SK-N-SH (cell line): ENCODE measurements at regions of chr9 and their contacts with region 1.

Region 1: DNA sequence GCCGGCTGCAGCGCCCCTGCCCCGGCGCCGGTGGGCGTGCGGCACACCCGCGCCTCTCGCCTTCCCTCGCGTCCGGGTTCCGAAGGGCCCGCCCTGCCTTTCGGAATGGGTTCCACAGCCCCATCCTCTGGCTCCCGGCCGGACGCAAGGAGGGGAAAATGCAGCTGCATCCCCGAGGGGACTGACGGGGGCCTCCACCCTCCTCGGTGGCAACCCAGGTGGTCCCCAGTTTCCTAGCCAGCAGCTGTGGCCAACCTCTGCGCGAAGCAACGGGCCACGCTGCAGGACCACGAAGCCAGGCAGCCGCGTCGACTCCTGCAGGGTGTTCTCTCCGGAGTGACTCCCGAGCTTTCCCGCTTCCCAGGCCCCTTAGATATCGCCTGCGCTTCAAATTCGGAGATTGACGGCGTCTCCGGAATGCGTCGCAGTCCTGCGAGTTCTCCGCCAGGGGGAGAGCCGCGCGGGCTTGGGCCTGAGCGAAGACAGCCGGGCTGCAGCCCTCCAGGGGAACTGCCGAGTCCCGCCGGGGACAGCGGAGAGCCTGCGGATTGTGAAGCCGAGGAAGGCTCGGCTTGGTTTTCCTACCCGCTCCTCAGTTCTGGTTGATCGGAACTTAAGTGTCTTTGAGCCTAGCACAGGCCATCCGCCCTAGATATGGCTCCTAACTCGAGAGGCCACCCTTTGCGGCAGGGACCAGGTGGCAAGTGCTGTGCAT is 582 bp upstream of the APBA1 start:
- DNase-seq: peak; percentile 86
- H3K4me3 ChIP-seq: peak overlapping the region; percentile 70 to 80
- H3K27ac ChIP-seq: peak overlapping the region; percentile 50 to 92
- H3K4me1 ChIP-seq: peaks cover 8 to 23% of the 10 kb centered on the region in 2 experiments; a peak in 3 of 4 replicates
- H3K27me3 ChIP-seq: no peaks in the 10 kb centered on the region
- CTCF ChIP-seq: peak; percentile 86
- EP300 ChIP-seq: no peak; a peak in 1 of 4 replicates
- RAD21 ChIP-seq: peak; percentile 71

Region 2: DNA sequence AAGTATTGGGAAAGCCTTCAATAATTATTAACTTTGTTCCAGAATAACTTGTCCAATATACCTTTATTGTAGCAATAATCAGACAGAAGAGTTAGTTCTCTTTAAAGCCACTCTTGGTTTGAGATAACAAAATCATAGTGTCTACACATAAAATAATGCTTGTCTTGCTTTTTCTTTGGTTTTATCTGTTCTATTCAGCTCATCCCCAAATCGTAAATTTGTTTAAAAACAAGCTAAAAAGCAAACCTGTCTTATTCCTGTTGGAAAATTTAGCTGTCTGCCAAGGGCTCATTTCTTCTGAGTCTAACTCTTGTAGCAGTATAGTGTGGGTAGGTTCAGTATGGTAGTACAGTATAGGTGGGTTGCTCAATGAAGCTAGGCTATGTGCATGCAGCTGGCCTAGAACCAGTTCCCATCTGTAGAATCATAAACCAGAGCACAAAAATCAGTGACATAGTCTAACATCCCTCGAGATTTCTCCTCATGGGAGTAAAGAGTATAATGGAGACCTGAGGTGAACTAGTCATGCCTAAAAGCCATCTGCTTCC is 17.3 kb after region 1 on chr9:
- CTCF ChIA-PET with region 1: interaction called, 10 read pairs
- POLR2A ChIA-PET with region 1: no interaction called
- DNase-seq: no peak
- H3K4me3 ChIP-seq: no peak overlapping the region
- H3K27ac ChIP-seq: no peak overlapping the region
- H3K4me1 ChIP-seq: no peaks in the 10 kb centered on the region
- H3K27me3 ChIP-seq: no peaks in the 10 kb centered on the region
- CTCF ChIP-seq: no peak
- EP300 ChIP-seq: no peak
- RAD21 ChIP-seq: no peak

Region 3: DNA sequence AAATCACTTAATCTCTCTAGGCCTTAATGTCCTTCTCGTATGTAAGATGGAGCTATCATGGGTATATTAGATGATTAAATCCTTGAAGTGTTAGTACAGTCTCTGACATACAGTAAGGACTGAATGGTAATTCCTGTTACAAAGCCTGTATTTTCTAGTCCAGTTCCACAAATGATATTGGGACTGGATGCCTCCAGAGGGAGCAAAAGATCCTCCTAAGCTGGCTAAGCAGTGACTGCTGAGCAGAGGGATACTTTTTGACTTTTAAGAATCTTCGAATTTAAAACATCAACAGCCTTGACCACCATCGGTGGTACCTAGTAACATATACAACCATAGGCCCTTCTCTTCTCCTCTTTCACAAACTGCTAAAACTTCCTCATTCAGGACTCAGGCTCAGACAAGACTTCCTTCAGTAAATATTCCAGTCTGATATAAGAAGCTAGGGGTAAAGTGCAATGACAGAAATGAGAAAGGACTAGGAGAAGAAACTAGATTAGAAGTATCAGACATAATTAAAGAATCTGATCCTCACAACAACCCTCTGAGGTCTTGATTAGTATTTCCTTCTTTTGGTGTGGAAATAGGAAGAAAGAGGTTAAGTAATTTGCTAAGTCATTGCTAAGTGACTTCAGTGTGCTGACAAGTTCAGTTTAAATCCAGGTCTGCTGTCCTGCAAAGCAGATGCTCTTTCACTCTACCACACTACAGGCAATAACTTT is 73.1 kb after region 1 on chr9:
- CTCF ChIA-PET with region 1: interaction called, 20 read pairs
- POLR2A ChIA-PET with region 1: no interaction called
- DNase-seq: no peak
- H3K4me3 ChIP-seq: no peak overlapping the region
- H3K27ac ChIP-seq: no peak overlapping the region
- H3K4me1 ChIP-seq: peaks cover 2 to 6% of the 10 kb centered on the region in 2 experiments; a peak in 3 of 4 replicates
- H3K27me3 ChIP-seq: no peaks in the 10 kb centered on the region
- CTCF ChIP-seq: peak; percentile 43
- EP300 ChIP-seq: no peak
- RAD21 ChIP-seq: peak; percentile 47

Region 4: DNA sequence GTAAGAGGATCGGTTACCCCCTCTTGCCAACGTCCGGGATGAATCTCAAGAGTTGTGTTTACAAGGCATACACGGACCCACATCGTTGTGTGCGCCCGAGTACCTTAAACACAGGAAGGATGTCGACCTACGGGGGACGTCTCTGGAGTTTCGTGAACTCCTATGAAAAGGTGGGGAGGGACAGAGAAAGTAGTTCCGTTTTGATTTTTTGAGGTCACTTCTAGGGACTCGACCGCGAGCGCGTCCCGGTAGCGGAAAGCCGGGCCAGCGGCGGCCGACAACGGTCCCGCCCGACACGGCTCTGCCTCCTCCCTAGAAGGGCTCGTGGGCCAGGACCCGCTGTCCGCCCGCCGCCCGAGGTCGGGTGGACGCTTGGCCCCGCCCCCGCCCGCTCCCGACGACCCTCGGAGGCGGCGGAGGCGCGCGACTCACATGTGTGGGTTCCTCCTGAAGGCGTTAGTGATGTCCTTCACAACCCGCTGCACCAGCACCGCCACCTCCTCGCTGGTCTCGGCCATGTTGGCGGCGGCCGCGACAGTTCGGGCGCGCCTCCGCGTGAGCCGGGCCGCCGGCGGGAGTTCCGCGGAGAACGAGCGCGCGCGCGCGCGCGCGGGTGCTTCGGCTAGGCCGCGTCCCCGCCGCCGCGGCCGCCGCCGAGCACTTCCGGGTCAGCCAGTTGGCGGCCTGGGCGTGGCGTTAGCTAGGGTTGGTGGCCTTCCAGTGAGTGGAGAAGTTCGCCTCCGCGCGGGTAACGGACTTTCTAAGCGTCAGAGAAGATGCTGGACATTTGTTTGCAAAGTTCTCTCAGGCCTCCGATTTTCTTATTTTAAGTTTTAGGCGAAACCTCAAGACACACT is 86.9 kb after region 1 on chr9 and contains the start of gene PTAR1:
- CTCF ChIA-PET with region 1: interaction called, 29 read pairs
- POLR2A ChIA-PET with region 1: no interaction called
- DNase-seq: peak; percentile 93
- H3K4me3 ChIP-seq: peak within 1 kb of the TSS; percentile 79 to 86
- H3K27ac ChIP-seq: peak within 1 kb of the TSS; percentile 93 to 94
- H3K4me1 ChIP-seq: peaks cover 4 to 14% of the 10 kb centered on the region in 2 experiments; a peak in 3 of 4 replicates
- H3K27me3 ChIP-seq: no peaks in the 10 kb centered on the region
- CTCF ChIP-seq: no peak
- EP300 ChIP-seq: peak in 1 of 2 experiments; percentile 75; a peak in 1 of 4 replicates
- RAD21 ChIP-seq: peak; percentile 14; the same call in 1 of the 2 replicates
- polyA plus RNA-seq, gene PTAR1: 4.7 and 7.8 TPM in 2 replicates

Region 5: GRCh38 chr9:69919461-69920061 is 246.8 kb after region 1 on chr9:
- CTCF ChIA-PET with region 1: interaction called, 46 read pairs
- POLR2A ChIA-PET with region 1: no interaction called
- DNase-seq: peak; percentile 69
- H3K4me3 ChIP-seq: no peak overlapping the region; a peak in 1 of 4 replicates
- H3K27ac ChIP-seq: no peak overlapping the region
- H3K4me1 ChIP-seq: peaks cover 0 to 4% of the 10 kb centered on the region in 2 experiments; a peak in 1 of 4 replicates
- H3K27me3 ChIP-seq: no peaks in the 10 kb centered on the region
- CTCF ChIP-seq: peak; percentile 88
- EP300 ChIP-seq: no peak
- RAD21 ChIP-seq: peak; percentile 87

Region 6: DNA sequence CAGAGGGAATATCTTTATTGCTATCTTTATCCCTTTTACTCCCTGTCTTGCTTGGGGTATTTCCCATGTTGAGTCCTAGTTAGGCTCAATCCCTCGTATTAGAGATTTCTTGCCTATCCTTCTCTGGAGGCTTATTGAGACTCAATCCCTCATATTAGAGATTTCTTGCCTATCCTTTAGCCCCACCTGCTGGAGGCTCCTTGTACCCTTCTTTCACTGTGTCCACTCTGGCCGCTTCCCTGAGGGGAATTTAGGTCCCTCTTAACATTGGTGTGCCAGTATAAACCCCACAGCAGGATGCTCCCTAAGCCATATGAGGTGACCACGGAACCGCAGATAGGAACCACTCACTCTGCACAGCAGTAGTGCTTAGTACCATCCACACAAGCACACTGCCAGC is 260.1 kb after region 1 on chr9:
- CTCF ChIA-PET with region 1: interaction called, 16 read pairs
- POLR2A ChIA-PET with region 1: no interaction called
- DNase-seq: no peak
- H3K4me3 ChIP-seq: no peak overlapping the region
- H3K27ac ChIP-seq: no peak overlapping the region
- H3K4me1 ChIP-seq: no peaks in the 10 kb centered on the region
- H3K27me3 ChIP-seq: no peaks in the 10 kb centered on the region
- CTCF ChIP-seq: peak; percentile 35
- EP300 ChIP-seq: no peak
- RAD21 ChIP-seq: peak; percentile 38; the same call in 1 of the 2 replicates